Left ventricle myocardium inferior (tissue), 1 donor: ENCODE measurements at regions of chr3 and their contacts with region 1.

Region 1: GRCh38 chr3:170307671-170308403 is 49.7 kb upstream of the SKIL start:
- DNase-seq: no peak
- H3K4me3 ChIP-seq: no peak overlapping the region
- H3K27ac ChIP-seq: no peak overlapping the region
- H3K4me1 ChIP-seq: peaks cover 4% of the 10 kb centered on the region
- H3K27me3 ChIP-seq: no peaks in the 10 kb centered on the region
- CTCF ChIP-seq: no peak

Region 2: GRCh38 chr3:170405101-170405500 is 97.3 kb after region 1 on chr3:
- intact Hi-C with region 1: loop called (anchors 10 kb)
- DNase-seq: no peak
- H3K4me3 ChIP-seq: no peak overlapping the region
- H3K27ac ChIP-seq: no peak overlapping the region
- H3K4me1 ChIP-seq: no peaks in the 10 kb centered on the region
- H3K27me3 ChIP-seq: no peaks in the 10 kb centered on the region
- CTCF ChIP-seq: no peak

Region 3: GRCh38 chr3:170418422-170419398 is 110.9 kb after region 1 on chr3 and contains the start of gene CLDN11:
- intact Hi-C with region 1: no loop called
- DNase-seq: peak; percentile 40
- H3K4me3 ChIP-seq: peak within 1 kb of the TSS; percentile 70
- H3K27ac ChIP-seq: peak within 1 kb of the TSS; percentile 70
- H3K4me1 ChIP-seq: peaks cover 37% of the 10 kb centered on the region
- H3K27me3 ChIP-seq: peaks cover 39% of the 10 kb centered on the region
- CTCF ChIP-seq: no peak
- total RNA-seq, gene CLDN11: 4.3 TPM

Region 4: DNA sequence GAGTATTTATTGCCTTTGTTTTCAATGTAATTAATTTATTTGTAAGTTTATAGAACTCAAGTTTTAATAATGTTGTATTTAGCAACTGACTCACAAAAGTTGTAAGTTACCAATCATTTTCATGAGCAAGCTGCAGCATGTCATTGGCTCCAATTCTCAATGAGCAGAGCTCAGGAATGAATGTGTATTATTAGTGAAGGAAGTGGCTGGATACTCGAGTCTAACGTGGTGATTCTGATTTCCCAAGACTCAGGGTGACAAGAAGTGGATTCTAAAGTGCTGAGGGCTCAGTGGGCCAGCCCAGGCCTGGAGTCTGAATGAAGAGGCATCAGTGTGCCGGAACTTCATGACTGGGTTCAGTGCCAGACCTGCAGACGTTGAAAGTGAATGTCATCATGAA is 150.4 kb after region 1 on chr3:
- intact Hi-C with region 1: no loop called
- DNase-seq: no peak
- H3K4me3 ChIP-seq: no peak overlapping the region
- H3K27ac ChIP-seq: no peak overlapping the region
- H3K4me1 ChIP-seq: no peaks in the 10 kb centered on the region
- H3K27me3 ChIP-seq: peaks cover 3% of the 10 kb centered on the region
- CTCF ChIP-seq: no peak